ENCODE measurements at regions of chr19 and their contacts with region 1.

Region 1: DNA sequence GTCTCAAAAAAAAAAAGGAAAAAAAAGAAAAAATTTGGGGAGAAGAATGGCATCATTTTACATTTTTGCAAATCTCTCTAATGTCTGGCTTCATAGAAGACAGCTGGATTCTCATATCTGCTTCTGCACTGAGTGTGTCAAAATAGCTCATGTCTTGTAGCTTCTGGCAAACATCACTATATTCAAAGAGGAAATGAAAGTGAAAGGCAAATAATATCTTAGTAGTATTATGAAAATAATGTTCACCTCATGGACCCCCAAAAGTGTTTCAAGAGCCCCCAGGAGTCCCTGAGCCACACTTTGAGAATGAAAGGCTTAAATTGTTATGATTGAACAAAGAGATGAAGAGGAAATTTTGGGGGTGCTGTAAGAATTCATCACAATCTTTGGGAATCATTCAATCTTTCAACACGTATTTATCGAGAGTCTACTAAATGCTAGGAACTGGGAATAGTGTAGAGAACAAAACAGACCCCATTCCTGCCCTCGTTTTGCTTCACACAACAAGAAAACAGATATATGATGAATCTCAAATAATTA is 1.2 kb upstream of the SLC6A16 start:
- DNase-seq: no peak
- ATAC-seq: no peak
- H3K4me3 Mint-ChIP-seq: no peak overlapping the region
- H3K27ac Mint-ChIP-seq: no peak overlapping the region
- H3K4me1 Mint-ChIP-seq: peaks cover 34% of the 10 kb centered on the region
- H3K27me3 Mint-ChIP-seq: no peaks in the 10 kb centered on the region

Region 2: DNA sequence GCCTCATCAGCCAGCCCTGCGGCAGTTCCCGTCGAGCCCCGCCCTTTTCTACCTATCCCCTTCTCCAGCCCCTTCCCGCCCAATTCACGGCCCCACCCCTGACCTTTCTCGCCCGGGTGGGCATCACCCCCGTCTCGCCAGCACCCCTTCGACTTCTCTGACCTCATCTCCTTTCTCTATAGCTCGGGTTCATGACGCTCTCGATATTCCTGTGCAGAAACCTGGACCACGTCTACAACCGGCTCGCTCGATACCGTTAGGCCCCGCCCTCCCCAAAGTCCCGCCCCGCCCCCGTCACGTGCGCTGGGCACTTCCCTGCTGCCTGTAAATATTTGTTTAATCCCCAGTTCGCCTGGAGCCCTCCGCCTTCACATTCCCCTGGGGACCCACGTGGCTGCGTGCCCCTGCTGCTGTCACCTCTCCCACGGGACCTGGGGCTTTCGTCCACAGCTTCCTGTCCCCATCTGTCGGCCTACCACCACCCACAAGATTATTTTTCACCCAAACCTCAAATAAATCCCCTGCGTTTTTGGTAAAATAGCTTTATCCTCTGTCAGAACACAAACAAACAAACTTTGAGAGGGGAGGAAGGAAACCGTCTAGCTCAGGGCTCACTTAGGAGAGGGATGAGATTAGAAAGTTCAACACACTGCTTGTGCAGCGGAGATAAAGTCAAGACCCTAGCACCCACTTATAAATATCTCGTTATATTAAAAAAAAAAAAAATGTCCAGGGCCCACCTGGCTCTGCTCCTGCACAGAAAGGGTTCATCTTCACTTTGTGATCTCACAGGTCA is 14.0 kb after region 1 on chr19:
- CTCF ChIA-PET with region 1: interaction called, 5 read pairs
- POLR2A ChIA-PET with region 1: interaction called, 11 read pairs
- intact Hi-C with region 1: no loop called
- DNase-seq: no peak
- ATAC-seq: no peak
- H3K4me3 Mint-ChIP-seq: no peak overlapping the region
- H3K27ac Mint-ChIP-seq: no peak overlapping the region
- H3K4me1 Mint-ChIP-seq: peaks cover 42% of the 10 kb centered on the region
- H3K27me3 Mint-ChIP-seq: no peaks in the 10 kb centered on the region

Region 3: DNA sequence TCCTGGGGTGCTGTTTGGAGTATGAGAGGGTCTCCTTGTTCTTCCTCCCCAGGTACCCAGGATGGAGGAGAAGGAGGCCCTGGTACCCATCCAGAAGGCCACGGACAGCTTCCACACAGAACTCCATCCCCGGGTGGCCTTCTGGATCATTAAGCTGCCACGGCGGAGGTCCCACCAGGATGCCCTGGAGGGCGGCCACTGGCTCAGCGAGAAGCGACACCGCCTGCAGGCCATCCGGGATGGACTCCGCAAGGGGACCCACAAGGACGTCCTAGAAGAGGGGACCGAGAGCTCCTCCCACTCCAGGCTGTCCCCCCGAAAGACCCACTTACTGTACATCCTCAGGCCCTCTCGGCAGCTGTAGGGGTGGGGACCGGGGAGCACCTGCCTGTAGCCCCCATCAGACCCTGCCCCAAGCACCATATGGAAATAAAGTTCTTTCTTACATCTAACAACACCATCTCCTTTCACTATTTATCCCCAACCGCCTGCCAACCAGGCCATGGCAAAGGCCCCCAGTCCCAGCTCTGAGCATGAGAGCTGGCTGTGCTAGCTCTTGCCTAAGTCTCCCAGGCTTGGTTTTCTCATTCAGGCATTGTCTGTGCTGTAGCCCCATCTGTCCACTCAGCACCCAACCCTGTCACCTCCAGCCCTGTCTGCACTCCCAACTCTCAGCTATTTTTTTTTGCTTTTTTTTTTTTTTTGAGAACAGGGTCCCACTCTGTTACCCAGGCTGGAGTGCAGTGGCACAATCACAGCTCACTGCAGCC is 48.6 kb after region 1 on chr19:
- CTCF ChIA-PET with region 1: no interaction called
- POLR2A ChIA-PET with region 1: no interaction called
- intact Hi-C with region 1: no loop called
- DNase-seq: no peak
- ATAC-seq: no peak
- H3K4me3 Mint-ChIP-seq: no peak overlapping the region
- H3K27ac Mint-ChIP-seq: no peak overlapping the region
- H3K4me1 Mint-ChIP-seq: no peaks in the 10 kb centered on the region
- H3K27me3 Mint-ChIP-seq: peaks cover 5% of the 10 kb centered on the region